ENCODE measurements at regions of chr20 and their contacts with region 1.

Region 1: DNA sequence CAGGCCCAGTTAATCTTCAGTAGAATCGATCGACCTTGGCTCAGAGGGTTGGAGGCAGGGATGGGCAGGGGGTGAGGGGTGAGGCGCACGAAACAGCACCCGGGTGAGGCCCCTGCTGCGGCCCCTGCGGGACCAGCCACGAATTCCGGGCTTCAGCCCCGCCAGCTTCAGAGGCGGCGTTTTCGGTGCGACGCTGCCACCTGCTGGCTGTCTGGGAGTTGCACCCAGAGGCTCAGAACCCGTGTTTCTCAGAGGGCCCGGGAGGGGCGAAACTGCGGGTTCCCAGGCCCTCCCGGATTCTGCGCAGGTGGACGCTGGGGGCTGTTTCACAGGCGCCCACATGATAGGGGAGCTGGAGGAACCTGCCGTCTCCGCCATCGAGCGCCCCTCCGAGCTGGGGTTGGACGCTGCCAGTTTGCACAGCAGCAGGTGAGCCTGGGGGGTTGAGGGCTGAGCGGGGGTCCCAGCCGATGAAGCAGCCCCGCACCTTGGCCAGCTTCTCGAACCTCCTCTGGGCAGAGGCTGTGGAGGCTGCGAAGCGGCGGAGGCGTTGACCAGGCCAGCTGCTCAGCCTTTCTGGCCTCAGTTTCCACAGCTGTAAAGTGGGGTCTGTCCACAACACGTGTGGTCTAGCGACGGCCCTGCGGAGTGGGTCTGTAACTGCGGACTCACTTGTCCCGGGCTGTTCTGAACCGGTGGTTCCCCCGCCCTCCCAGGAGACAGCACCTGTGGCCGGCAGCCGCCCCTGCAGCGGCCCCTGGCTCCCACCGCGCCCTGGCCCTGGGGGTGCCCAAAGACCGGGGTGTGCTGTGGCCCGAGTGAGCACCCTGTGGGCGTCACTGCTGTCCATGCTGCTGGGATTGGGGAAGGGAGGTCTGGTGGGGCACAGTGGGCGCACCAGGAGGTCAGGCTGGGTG is 2.5 kb upstream of the BHLHE23 start:
- DNase-seq: peak; percentile 55
- H3K4me3 ChIP-seq: no peak overlapping the region
- H3K27ac ChIP-seq: no peak overlapping the region
- H3K4me1 ChIP-seq: no peaks in the 10 kb centered on the region
- H3K27me3 ChIP-seq: peaks cover 55% of the 10 kb centered on the region
- CTCF ChIP-seq: peak; percentile 73 to 94

Region 2: GRCh38 chr20:62875419-62876361 is 133.6 kb before region 1 on chr20:
- CTCF ChIA-PET with region 1: no interaction called
- dilution Hi-C with region 1: no loop called
- in situ Hi-C with region 1: loop called in 1 of 2 experiments (anchors 25 kb)
- intact Hi-C with region 1: loop called (anchors 1 kb)
- DNase-seq: peak; percentile 69
- H3K4me3 ChIP-seq: peak overlapping the region in 1 of 3 experiments; percentile 6
- H3K27ac ChIP-seq: no peak overlapping the region
- H3K4me1 ChIP-seq: peaks cover 14% of the 10 kb centered on the region
- H3K27me3 ChIP-seq: no peaks in the 10 kb centered on the region
- CTCF ChIP-seq: peak; percentile 14 to 44

Region 3: DNA sequence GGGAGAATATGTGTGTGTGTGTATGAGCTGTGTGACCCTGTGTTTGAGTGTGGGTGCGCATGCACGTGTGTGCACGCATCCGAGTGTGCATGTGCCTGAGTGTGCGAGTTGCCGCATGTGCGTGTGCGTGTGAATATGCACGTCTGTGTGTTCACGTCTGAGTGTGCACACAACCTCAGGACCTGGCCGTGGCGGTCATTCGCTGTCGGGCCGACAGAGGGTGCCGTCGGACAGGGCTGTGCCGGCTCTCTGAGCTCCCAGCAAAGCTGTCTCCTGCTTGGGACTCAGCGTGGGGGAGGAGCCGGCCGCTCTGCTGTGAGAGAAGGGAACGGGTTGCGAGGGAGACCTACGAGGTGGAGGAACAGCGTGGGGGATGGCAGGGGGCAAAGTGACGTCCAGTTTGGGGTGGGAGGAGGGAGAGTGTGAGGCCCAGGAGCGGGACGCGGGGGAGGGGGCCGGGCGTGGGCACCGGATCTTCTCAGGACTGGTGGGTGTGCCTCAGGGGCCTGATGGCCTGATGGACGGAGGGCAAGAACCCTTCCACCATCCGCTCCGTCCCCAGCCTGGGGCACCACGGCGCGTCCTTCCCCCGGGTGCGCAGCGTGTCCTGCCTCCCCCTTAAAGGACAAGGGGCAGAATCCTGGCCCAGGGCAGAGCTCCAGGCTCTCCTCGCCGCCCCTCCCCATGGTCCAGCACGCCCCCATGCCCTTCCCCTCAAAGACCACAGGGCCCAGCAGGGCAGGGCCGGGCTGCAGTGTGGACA is 36.9 kb before region 1 on chr20:
- CTCF ChIA-PET with region 1: interaction called, 4 read pairs
- dilution Hi-C with region 1: no loop called
- in situ Hi-C with region 1: no loop called
- intact Hi-C with region 1: loop called (anchors 1 kb)
- DNase-seq: peak; percentile 64
- H3K4me3 ChIP-seq: peak overlapping the region in 2 of 3 experiments; percentile 10 to 13
- H3K27ac ChIP-seq: no peak overlapping the region
- H3K4me1 ChIP-seq: peaks cover 12% of the 10 kb centered on the region
- H3K27me3 ChIP-seq: peaks cover 3% of the 10 kb centered on the region
- CTCF ChIP-seq: peak; percentile 87 to 94

Region 4: DNA sequence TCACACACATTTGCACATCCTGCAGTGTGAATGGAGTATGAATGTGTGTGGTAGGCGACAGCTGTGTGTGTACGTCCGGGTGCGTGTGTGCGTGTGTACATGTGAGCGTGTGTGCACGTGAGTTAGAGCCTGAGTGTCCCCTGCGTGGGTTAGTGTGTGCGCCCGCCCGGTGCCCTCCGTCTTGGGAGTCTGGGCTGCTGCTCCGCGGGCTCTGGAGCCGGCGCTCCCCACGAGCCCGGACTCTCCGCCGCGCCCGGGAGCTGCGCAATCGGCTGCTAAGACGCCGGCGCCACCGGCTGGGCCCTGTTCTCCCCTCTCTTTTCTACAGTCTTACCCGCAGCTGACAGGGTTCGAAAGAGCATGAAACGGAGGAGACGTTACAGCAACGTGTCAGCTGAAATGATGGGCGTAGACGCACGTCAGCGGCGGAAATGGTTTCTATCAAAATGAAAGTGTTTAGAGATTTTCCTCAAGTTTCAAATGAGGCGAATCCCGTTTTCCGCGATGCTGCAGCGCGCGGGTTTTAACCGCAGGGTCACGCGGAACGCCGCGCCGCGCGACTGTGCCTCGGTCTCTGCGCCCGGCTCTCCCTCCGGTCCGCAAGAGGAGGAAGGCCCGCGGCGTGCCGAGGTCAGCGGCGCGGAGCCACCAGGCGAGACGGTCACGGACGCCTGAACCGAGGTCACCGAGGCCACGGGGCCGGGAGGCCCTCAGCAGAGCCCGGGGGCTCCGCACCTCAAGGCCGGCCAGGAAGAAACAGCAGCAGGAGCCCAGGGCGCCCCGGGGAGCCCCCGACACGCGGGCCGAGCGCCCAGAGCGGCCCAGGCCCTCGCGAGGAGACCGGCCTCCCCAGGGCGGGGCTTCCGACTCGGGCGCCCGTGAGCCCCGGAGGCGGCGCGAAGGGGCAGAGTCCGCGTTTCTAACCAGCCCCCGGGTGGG is 92.7 kb after region 1 on chr20:
- CTCF ChIA-PET with region 1: no interaction called
- dilution Hi-C with region 1: no loop called
- in situ Hi-C with region 1: no loop called
- intact Hi-C with region 1: no loop called
- DNase-seq: peak; percentile 32
- H3K4me3 ChIP-seq: peak overlapping the region; percentile 58 to 67 (median 61)
- H3K27ac ChIP-seq: no peak overlapping the region
- H3K4me1 ChIP-seq: peaks cover 14% of the 10 kb centered on the region
- H3K27me3 ChIP-seq: peaks cover 2% of the 10 kb centered on the region
- CTCF ChIP-seq: no peak

Region 5: DNA sequence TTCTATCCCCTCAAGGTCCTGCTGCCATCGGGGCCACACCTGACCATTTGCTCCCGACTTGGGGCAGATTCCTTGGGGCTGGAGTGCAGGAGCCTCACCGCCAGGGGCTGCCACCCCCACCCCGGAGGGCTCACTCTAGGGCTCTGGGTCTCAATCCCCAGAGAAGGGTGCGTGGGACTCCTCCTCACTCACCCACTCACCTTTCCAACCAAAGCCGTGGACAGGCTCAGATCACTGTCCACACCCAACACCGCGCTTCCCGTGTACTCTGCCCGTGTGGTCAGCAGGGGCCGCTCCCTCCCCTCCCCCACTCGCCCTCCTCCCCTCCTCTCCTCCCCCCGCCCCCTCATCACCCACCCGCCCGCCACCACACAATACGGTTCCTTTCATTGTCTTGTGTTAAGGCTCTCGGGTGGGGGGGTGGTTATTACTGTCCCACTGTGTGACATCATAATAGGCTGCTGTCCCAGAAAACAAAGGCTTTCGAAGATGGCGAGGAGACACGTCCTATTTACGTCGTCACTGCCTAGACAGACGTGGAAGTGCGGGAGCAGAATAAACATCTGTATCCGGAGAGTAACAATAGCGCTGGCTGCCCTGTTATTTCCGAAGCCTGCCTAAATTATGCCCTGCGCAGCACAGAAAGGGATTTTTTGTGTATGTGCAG is 120.8 kb after region 1 on chr20:
- CTCF ChIA-PET with region 1: no interaction called
- dilution Hi-C with region 1: no loop called
- in situ Hi-C with region 1: no loop called
- intact Hi-C with region 1: no loop called
- DNase-seq: no peak
- H3K4me3 ChIP-seq: no peak overlapping the region
- H3K27ac ChIP-seq: no peak overlapping the region
- H3K4me1 ChIP-seq: no peaks in the 10 kb centered on the region
- H3K27me3 ChIP-seq: no peaks in the 10 kb centered on the region
- CTCF ChIP-seq: no peak

Measured in mammary epithelial cell (primary cell).